Posterior cingulate gyrus (tissue), 11 donors: ENCODE measurements at regions of chr6 and their contacts with region 1.

Region 1: GRCh38 chr6:63352587-63353285 is 33.0 kb upstream of the LGSN start:
- DNase-seq: no peak

Region 2: DNA sequence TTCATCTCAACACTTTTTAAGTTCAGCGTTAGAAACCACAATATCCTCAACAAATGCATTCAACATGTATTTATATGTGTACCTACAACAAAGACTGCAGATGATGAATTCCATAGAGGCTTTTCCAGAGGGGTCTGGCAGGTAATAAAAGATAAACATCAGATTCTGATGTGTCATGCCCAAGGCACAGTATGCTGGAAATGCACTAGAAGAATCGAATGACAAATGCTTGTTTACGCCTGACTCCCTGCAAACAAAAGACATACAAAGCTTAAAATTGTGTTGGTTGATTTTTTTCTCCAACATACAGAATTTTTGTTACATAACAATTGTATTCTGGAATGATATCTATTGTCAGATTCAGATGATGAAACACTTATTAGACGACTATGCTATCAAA is 32.8 kb before region 1 on chr6 and contains the start of gene LGSN:
- intact Hi-C with region 1: no loop called
- DNase-seq: no peak

Region 3: GRCh38 chr6:63584125-63584514 is 231.4 kb after region 1 on chr6:
- intact Hi-C with region 1: loop called (anchors 10 kb)
- DNase-seq: no peak

Region 4: GRCh38 chr6:63802606-63803206 is 450.0 kb after region 1 on chr6:
- intact Hi-C with region 1: loop called (anchors 2 kb)
- DNase-seq: no peak